GM12878 (cell line): ENCODE measurements at regions of chr11 and their contacts with region 1.

Region 1: GRCh38 chr11:97079244-97079643 is 689.4 kb downstream of the JRKL start:
- DNase-seq: peak; percentile 17
- ATAC-seq: peak; percentile 91
- H3K4me3 ChIP-seq: no peak overlapping the region
- H3K27ac ChIP-seq: no peak overlapping the region
- H3K4me1 ChIP-seq: no peaks in the 10 kb centered on the region
- H3K27me3 ChIP-seq: no peaks in the 10 kb centered on the region
- CTCF ChIP-seq: no peak
- EP300 ChIP-seq: peak; percentile 52 to 74; a peak in 2 of 4 replicates
- POLR2A ChIP-seq: no peak
- RAD21 ChIP-seq: no peak

Region 2: DNA sequence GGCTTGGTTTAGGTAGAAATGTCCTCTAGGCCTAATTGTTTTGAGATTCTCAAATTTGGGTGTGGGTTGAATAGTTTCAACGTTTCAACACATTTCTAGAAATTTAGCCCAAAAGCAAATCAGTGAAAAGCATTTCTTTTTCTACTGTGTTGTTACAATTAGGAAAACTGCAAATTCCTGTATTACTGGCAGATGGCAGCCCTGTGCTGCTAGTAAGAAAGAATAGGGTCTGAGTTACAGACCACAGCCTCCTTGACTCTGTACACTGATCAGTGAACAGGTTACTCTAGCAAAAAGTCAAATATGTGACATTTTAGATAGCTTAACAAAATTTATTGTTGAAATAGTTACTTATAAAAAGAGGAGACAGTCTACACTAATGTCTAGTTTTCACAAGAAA is 13.6 kb after region 1 on chr11:
- CTCF ChIA-PET with region 1: interaction called, 6 read pairs
- POLR2A ChIA-PET with region 1: no interaction called
- RAD21 ChIA-PET with region 1: interaction called, 4 read pairs
- SMC1A ChIA-PET with region 1: interaction called, 16 read pairs
- in situ Hi-C with region 1: no loop called
- intact Hi-C with region 1: no loop called
- DNase-seq: no peak
- ATAC-seq: peak; percentile 51
- H3K4me3 ChIP-seq: no peak overlapping the region
- H3K27ac ChIP-seq: no peak overlapping the region
- H3K4me1 ChIP-seq: no peaks in the 10 kb centered on the region
- H3K27me3 ChIP-seq: no peaks in the 10 kb centered on the region
- CTCF ChIP-seq: no peak; a peak in 1 of 6 replicates
- EP300 ChIP-seq: no peak
- POLR2A ChIP-seq: no peak
- RAD21 ChIP-seq: no peak

Region 3: DNA sequence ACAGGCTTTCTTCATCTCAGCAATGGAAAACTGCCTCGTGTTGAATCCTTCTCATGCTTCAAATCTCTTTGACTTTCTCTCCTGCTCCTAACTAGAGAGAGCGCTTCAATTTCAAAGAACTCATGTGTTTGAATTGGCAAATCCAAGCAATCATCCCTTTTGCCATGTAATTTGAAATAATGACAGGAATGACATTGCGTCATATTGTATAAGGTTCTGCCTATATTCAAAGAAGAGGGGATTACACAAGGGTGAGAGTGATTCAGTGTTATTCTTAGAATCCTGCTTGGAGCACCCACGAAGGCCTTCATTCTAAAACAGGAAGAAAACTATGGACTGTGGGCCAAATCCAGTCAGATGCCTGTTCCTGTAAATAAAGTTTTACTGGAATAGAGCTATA is 31.1 kb after region 1 on chr11:
- CTCF ChIA-PET with region 1: interaction called, 7 read pairs
- POLR2A ChIA-PET with region 1: interaction called, 3 read pairs
- RAD21 ChIA-PET with region 1: interaction called, 20 read pairs
- SMC1A ChIA-PET with region 1: interaction called, 27 read pairs
- in situ Hi-C with region 1: no loop called
- intact Hi-C with region 1: no loop called
- DNase-seq: no peak
- ATAC-seq: no peak
- H3K4me3 ChIP-seq: no peak overlapping the region
- H3K27ac ChIP-seq: no peak overlapping the region
- H3K4me1 ChIP-seq: no peaks in the 10 kb centered on the region
- H3K27me3 ChIP-seq: no peaks in the 10 kb centered on the region
- CTCF ChIP-seq: no peak
- EP300 ChIP-seq: no peak
- POLR2A ChIP-seq: no peak
- RAD21 ChIP-seq: no peak

Region 4: DNA sequence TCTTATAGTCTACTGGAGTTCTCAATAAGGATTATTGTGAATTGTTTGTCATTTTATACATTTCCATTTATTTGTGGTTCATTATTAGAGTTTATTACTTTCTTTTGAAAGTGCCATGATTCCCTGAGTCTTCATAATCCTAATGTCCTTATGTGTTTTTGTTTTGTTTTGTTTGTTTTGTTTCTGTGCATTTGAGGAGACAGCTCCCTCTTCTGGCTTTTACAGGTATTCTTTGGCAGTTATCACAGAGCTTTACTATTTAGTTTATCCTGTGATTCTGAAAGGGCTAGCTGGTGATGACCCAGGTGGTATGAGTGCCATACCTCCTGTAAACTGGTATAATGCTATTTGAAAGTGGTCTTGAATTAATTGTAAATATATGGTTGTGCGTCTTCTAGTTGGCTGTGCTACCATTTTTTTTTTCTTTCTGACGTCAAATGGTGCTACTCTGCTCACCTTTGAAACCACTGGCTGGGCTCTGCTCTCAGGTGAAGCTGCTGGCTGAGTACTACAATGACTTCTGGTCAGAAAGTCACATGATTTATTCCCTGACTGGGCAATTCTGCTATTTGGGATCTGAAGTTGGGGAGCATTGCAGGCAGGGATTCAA is 61.7 kb after region 1 on chr11:
- CTCF ChIA-PET with region 1: interaction called, 14 read pairs
- POLR2A ChIA-PET with region 1: interaction called, 5 read pairs
- RAD21 ChIA-PET with region 1: interaction called, 5 read pairs
- SMC1A ChIA-PET with region 1: interaction called, 8 read pairs
- in situ Hi-C with region 1: no loop called
- intact Hi-C with region 1: no loop called
- DNase-seq: no peak
- ATAC-seq: peak; percentile 77
- H3K4me3 ChIP-seq: no peak overlapping the region
- H3K27ac ChIP-seq: no peak overlapping the region
- H3K4me1 ChIP-seq: no peaks in the 10 kb centered on the region
- H3K27me3 ChIP-seq: no peaks in the 10 kb centered on the region
- CTCF ChIP-seq: peak; percentile 50 to 56 (median 55); a peak in 5 of 6 replicates
- EP300 ChIP-seq: no peak
- POLR2A ChIP-seq: no peak
- RAD21 ChIP-seq: peak; percentile 70